GM12878 (cell line): ENCODE measurements at regions of chr11 and their contacts with region 1.

Region 1: GRCh38 chr11:111454561-111455192 is 57.5 kb downstream of the BTG4 start:
- DNase-seq: no peak
- ATAC-seq: peak; percentile 77
- H3K4me3 ChIP-seq: no peak overlapping the region
- H3K27ac ChIP-seq: no peak overlapping the region
- H3K4me1 ChIP-seq: peaks cover 9% of the 10 kb centered on the region
- H3K27me3 ChIP-seq: peaks cover 3% of the 10 kb centered on the region in 2 experiments; a peak in 3 of 4 replicates
- CTCF ChIP-seq: peak; percentile 21 to 52 (median 38); a peak in 5 of 6 replicates
- EP300 ChIP-seq: no peak
- POLR2A ChIP-seq: no peak
- RAD21 ChIP-seq: peak; percentile 43

Region 2: DNA sequence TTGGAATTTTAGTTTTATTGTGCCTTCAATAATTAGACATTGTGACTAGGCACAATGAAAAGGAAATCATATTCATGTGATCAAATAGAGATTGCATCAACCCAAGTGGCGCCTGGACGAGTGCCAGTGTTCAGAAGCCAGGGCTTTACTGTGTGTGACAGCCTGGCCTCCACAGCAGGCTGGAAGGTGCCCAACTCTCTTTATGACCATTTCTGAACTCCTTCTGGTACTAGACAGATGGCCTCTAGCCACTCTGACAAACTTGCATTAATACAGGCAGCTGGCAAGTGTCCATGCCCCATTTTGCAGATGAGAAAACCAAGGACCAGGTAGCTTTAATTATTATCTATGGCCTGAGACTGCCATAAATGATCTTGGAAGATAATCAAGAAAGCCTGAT is 67.3 kb before region 1 on chr11:
- CTCF ChIA-PET with region 1: no interaction called
- POLR2A ChIA-PET with region 1: no interaction called
- RAD21 ChIA-PET with region 1: no interaction called
- SMC1A ChIA-PET with region 1: no interaction called
- in situ Hi-C with region 1: no loop called
- intact Hi-C with region 1: no loop called
- DNase-seq: no peak
- ATAC-seq: no peak
- H3K4me3 ChIP-seq: no peak overlapping the region
- H3K27ac ChIP-seq: no peak overlapping the region
- H3K4me1 ChIP-seq: peaks cover 15% of the 10 kb centered on the region
- H3K27me3 ChIP-seq: no peaks in the 10 kb centered on the region
- CTCF ChIP-seq: no peak
- EP300 ChIP-seq: no peak
- POLR2A ChIP-seq: no peak
- RAD21 ChIP-seq: no peak

Region 3: GRCh38 chr11:111465400-111465799 is 10.7 kb after region 1 on chr11:
- CTCF ChIA-PET with region 1: interaction called, 12 read pairs
- POLR2A ChIA-PET with region 1: no interaction called
- RAD21 ChIA-PET with region 1: no interaction called
- SMC1A ChIA-PET with region 1: interaction called, 7 read pairs
- in situ Hi-C with region 1: no loop called
- intact Hi-C with region 1: no loop called
- DNase-seq: no peak
- ATAC-seq: no peak
- H3K4me3 ChIP-seq: no peak overlapping the region
- H3K27ac ChIP-seq: no peak overlapping the region
- H3K4me1 ChIP-seq: no peaks in the 10 kb centered on the region
- H3K27me3 ChIP-seq: no peaks in the 10 kb centered on the region; a peak in 3 of 4 replicates
- CTCF ChIP-seq: no peak
- EP300 ChIP-seq: no peak
- POLR2A ChIP-seq: no peak
- RAD21 ChIP-seq: no peak

Region 4: DNA sequence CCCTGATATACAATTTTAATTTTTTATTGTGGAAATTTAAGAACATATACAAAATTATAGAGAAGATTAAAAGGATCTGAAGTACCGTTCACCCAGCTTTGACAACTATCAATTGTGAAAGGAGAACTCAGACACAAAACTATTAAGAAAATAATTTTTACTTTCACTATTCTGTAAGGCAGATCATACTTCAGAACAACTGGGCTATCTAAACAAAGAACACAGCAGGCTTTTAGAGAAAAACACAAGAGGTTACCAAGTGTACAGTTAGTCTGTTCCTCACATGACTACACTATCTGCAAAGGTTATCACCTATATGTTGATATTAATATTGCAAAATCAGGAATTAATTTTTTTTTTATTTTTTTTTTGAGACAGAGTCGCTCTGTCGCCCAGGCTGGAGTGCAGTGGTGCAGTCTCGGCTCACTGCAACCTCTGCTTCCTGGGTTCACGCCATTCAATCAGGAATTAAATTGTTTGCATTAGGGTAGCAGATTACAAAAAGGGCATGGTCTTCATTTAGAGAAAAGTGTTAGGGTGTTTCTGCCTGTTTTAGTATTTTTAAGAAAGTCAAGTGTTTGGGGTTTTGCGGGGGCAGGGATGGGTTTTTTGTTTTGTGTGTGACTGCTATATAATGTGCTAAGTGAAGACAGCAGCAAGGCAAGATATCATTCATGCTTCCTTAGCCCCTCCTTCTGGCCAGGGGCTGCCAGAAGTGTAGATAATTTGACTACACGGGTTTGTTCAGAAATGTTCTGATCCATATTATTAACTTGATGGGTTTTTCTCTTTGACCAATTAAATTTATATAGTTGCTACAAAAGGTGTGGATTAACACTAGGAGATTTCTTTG is 119.9 kb after region 1 on chr11:
- CTCF ChIA-PET with region 1: no interaction called
- POLR2A ChIA-PET with region 1: no interaction called
- RAD21 ChIA-PET with region 1: interaction called, 3 read pairs
- SMC1A ChIA-PET with region 1: no interaction called
- in situ Hi-C with region 1: no loop called
- intact Hi-C with region 1: loop called (anchors 5 kb)
- DNase-seq: no peak
- ATAC-seq: peak; percentile 77
- H3K4me3 ChIP-seq: no peak overlapping the region
- H3K27ac ChIP-seq: no peak overlapping the region
- H3K4me1 ChIP-seq: no peaks in the 10 kb centered on the region
- H3K27me3 ChIP-seq: no peaks in the 10 kb centered on the region
- CTCF ChIP-seq: peak in 2 of 3 experiments; percentile 5 to 37; a peak in 1 of 6 replicates
- EP300 ChIP-seq: no peak
- POLR2A ChIP-seq: no peak
- RAD21 ChIP-seq: 0 out of 2 replicates have a peak, but pooled peaks have one; percentile 22

Region 5: DNA sequence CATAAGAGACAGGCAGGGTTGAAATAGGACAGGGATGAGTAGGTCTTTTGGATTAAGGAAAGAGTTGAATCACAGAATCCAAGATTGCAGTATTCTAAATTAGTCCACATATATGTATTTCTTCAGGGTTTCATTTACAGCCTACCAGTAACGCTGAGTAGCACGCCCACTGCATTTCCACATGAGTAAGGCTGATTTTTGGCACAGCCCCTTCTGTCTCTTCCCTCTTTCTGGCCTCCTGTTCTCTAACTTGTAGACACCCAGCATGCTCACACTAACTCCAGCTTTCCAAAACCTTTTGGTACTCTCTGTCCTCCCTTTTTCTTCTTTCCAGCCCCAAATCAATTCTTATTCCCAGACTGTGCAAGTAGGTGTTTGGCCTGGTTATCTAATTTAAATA is 143.9 kb after region 1 on chr11:
- CTCF ChIA-PET with region 1: no interaction called
- POLR2A ChIA-PET with region 1: no interaction called
- RAD21 ChIA-PET with region 1: no interaction called
- SMC1A ChIA-PET with region 1: no interaction called
- in situ Hi-C with region 1: no loop called
- intact Hi-C with region 1: no loop called
- DNase-seq: no peak
- ATAC-seq: no peak
- H3K4me3 ChIP-seq: no peak overlapping the region
- H3K27ac ChIP-seq: no peak overlapping the region
- H3K4me1 ChIP-seq: peaks cover 7% of the 10 kb centered on the region
- H3K27me3 ChIP-seq: no peaks in the 10 kb centered on the region
- CTCF ChIP-seq: no peak
- EP300 ChIP-seq: no peak
- POLR2A ChIP-seq: no peak
- RAD21 ChIP-seq: no peak